Testis (tissue), 5 donors: ENCODE measurements at regions of chr17 and their contacts with region 1.

Region 1: DNA sequence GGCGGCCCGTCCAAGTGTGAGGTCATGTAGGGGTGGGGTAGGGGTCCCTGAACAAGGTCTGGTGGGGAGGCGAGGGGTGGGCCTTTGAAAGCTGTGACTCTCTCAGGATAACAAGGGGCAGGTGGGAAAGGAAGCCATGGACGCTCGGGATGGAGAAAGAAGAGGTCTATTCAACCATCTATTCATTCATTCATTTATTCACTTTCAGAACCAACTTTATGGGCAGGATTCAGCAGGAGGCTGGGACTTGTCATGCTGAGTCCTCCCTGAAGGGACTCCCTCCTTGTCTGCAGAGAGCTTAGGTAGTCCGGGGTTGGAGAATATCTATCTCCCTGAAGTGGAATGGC is 8.6 kb upstream of the CD300A start:
- DNase-seq: no peak
- H3K4me3 ChIP-seq: no peak overlapping the region
- H3K27ac ChIP-seq: no peak overlapping the region
- H3K4me1 ChIP-seq: peaks cover 20% of the 10 kb centered on the region
- H3K27me3 ChIP-seq: no peaks in the 10 kb centered on the region
- CTCF ChIP-seq: no peak
- POLR2A ChIP-seq: no peak

Region 2: DNA sequence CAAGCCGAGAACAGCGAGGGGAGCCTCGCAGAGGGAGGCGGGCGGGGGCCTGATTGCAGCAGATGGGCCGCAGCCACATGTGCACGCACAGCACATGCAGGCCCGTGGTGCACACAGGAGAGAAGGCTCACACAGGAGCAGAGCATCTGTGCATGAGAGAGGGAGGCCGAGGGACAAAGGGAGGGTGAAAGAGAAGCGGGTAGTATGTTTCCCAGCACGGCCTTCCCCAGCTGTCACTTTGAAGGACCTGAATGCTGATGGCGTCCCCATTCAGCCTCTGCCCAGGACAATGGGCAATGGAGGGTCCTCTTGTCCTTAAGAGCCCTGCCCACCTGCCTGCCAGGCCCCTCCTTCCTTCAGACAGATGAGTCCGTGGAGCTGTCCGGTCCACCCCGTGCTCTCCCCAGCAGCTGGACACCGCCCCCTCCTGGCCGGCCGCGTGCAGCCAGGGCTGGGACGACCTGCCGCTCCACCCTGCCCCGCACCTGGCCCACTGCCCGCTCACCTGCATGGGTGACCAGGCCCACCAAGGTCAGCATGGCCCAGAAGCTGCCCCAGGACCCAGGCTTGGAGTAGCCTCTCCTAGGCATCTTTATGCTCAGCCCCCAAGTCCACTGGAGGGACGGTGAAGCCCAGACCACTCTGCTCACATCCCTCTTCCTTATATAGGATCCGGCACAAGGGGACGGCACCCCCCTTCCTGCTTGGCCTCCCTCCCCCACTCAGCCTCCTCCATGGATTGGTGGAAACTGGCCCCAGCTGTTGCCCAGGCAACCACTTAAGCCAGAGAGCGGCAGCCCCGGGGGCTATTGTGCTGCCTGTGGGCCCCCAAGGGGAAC is 96.3 kb before region 1 on chr17 and contains the start of gene BTBD17:
- intact Hi-C with region 1: no loop called
- DNase-seq: peak; percentile 73
- H3K4me3 ChIP-seq: no peak within 1 kb of the TSS
- H3K27ac ChIP-seq: no peak within 1 kb of the TSS
- H3K4me1 ChIP-seq: no peaks in the 10 kb centered on the region
- H3K27me3 ChIP-seq: no peaks in the 10 kb centered on the region
- CTCF ChIP-seq: peak; percentile 52 to 75 (median 67)
- POLR2A ChIP-seq: no peak
- total RNA-seq, gene BTBD17: 0.79 to 1.2 TPM

Region 3: GRCh38 chr17:74379495-74380085 is 78.2 kb before region 1 on chr17:
- intact Hi-C with region 1: loop called (anchors 2 kb)
- DNase-seq: peak; percentile 94
- H3K4me3 ChIP-seq: no peak overlapping the region
- H3K27ac ChIP-seq: no peak overlapping the region
- H3K4me1 ChIP-seq: peaks cover 9% of the 10 kb centered on the region
- H3K27me3 ChIP-seq: no peaks in the 10 kb centered on the region
- CTCF ChIP-seq: peak; percentile 95 to 98 (median 97)
- POLR2A ChIP-seq: no peak

Region 4: DNA sequence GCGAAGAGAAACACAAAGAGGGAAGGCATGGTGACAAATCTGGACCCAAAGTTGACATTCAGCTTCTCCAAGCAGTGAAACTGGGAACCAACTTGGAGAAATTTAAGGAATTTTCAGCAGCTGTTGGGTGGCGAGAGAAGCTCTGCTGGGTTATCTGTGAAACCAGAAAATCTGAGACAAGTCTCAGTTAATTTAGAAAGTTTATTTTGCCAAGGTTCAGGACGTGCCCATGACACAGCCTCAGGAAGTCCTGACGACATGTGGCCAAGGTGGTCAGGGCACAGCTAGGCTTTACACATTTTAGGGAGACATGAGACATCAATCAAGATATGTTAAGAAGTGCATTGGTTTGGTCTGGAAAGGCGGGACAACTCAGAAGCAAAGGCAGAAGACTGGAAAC is 266.1 kb after region 1 on chr17:
- intact Hi-C with region 1: no loop called
- DNase-seq: no peak
- H3K4me3 ChIP-seq: no peak overlapping the region
- H3K27ac ChIP-seq: no peak overlapping the region
- H3K4me1 ChIP-seq: no peaks in the 10 kb centered on the region
- H3K27me3 ChIP-seq: no peaks in the 10 kb centered on the region
- CTCF ChIP-seq: no peak
- POLR2A ChIP-seq: no peak